ENCODE measurements at regions of chr2 and their contacts with region 1.

Region 1: GRCh38 chr2:189661148-189661956 is at the start of gene ASNSD1:
- DNase-seq: peak; percentile 100
- H3K4me3 ChIP-seq: peak within 1 kb of the TSS; percentile 100
- H3K27ac ChIP-seq: peak within 1 kb of the TSS; percentile 54
- H3K27me3 ChIP-seq: no peaks in the 10 kb centered on the region
- CTCF ChIP-seq: peak; percentile 94
- polyA plus RNA-seq, gene ASNSD1: 38.3 and 50.1 TPM in 2 replicates

Region 2: GRCh38 chr2:188734691-188735090 is 926.7 kb before region 1 on chr2:
- CTCF ChIA-PET with region 1: no interaction called
- POLR2A ChIA-PET with region 1: no interaction called
- DNase-seq: no peak
- H3K4me3 ChIP-seq: no peak overlapping the region
- H3K27ac ChIP-seq: no peak overlapping the region
- H3K27me3 ChIP-seq: no peaks in the 10 kb centered on the region
- CTCF ChIP-seq: no peak

Region 3: GRCh38 chr2:189466660-189467059 is 194.7 kb before region 1 on chr2:
- CTCF ChIA-PET with region 1: interaction called, 18 read pairs
- POLR2A ChIA-PET with region 1: no interaction called
- DNase-seq: peak; percentile 1
- H3K4me3 ChIP-seq: no peak overlapping the region
- H3K27ac ChIP-seq: no peak overlapping the region
- H3K27me3 ChIP-seq: no peaks in the 10 kb centered on the region
- CTCF ChIP-seq: peak; percentile 78

Region 4: DNA sequence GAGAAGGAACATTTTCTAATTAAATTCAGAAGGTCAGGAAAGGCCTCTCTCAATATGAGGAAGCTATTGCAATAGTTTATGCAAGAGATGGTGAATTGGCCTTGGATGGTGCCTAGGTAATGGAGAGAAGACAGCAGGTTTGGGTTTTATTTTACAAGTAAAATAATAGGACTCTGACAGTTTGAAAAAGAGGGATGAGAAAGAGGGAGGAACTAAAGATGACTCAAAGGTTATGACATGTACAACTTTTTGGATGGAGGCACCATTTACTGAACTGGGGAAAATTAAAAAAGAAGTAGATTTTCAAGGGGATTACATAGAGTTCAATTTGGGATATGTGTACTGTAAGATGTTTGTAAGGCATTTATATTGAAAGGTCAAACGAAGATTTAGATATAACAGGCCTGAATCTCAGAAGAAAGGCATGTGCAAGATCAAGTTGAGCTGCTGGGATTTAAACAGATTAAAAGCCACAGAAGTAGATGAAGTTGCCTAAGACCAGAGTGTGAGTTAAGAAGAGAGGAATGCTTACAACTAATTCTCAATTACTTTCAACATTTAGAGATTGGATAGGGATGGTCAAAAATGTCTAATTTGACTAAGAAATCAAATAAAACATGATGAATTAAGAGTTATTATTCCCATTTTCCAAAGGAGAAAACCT is 12.4 kb before region 1 on chr2:
- CTCF ChIA-PET with region 1: interaction called, 35 read pairs
- POLR2A ChIA-PET with region 1: no interaction called
- DNase-seq: peak; percentile 37
- H3K4me3 ChIP-seq: no peak overlapping the region
- H3K27ac ChIP-seq: no peak overlapping the region
- H3K27me3 ChIP-seq: no peaks in the 10 kb centered on the region
- CTCF ChIP-seq: no peak

Region 5: GRCh38 chr2:189698020-189698887 is 36.9 kb after region 1 on chr2:
- CTCF ChIA-PET with region 1: interaction called, 56 read pairs
- POLR2A ChIA-PET with region 1: interaction called, 3 read pairs
- DNase-seq: no peak
- H3K4me3 ChIP-seq: no peak overlapping the region
- H3K27ac ChIP-seq: no peak overlapping the region
- H3K27me3 ChIP-seq: no peaks in the 10 kb centered on the region
- CTCF ChIP-seq: peak; percentile 65

Region 6: DNA sequence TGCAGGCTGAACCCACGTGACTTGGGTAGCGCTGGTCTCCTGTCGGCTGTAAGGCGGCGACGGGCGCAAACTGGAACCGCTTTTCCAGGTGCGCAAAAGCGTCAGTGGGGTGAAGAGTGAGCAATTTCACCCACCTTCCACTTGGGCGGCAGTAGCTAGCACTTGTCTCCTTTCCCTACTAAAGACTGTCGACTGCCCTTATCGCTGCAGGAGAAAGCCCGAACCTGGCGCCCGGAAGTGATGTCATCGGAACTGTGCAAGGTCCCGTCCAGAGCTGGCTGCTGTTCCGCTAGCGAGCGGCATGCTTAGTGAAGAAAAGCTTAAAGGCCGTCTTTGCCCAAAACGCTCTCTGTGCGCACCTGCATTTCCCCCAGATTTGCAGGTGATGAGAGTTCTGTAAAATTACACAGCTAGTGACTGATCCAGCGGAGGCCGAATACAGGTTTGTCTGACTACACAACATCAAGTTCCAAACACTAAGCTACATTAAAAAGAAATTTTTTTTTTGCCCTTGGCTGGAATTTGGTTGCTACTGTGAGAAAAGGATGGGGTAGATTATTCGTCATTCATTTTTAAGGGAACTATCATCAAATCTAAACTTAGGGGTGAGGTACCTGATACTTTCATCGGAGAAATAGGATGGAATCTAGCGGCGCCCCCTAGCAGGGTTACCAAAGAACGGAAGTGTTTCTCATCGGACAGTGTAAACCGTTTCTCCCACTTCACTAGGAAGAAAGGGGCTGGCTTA is 101.4 kb after region 1 on chr2 and contains the start of gene OSGEPL1:
- CTCF ChIA-PET with region 1: interaction called, 37 read pairs
- POLR2A ChIA-PET with region 1: no interaction called
- DNase-seq: peak; percentile 71
- H3K4me3 ChIP-seq: peak within 1 kb of the TSS; percentile 75
- H3K27ac ChIP-seq: peak within 1 kb of the TSS; percentile 78
- H3K27me3 ChIP-seq: no peaks in the 10 kb centered on the region
- CTCF ChIP-seq: peak; percentile 72
- polyA plus RNA-seq, gene OSGEPL1: 3.9 and 6.0 TPM in 2 replicates

Region 7: GRCh38 chr2:190069936-190070696 is 408.8 kb after region 1 on chr2:
- CTCF ChIA-PET with region 1: interaction called, 19 read pairs
- POLR2A ChIA-PET with region 1: no interaction called
- DNase-seq: peak; percentile 43
- H3K4me3 ChIP-seq: no peak overlapping the region
- H3K27ac ChIP-seq: no peak overlapping the region
- H3K27me3 ChIP-seq: no peaks in the 10 kb centered on the region
- CTCF ChIP-seq: peak; percentile 74

Measured in AG04450 (cell line).